MCF 10A (cell line): ENCODE measurements at regions of chr2 and their contacts with region 1.

Region 1: GRCh38 chr2:47437287-47437686 is 34.3 kb downstream of the MSH2 start:
- DNase-seq: peak; percentile 46
- H3K4me3 Mint-ChIP-seq: no peak overlapping the region
- H3K27ac Mint-ChIP-seq: no peak overlapping the region
- H3K4me1 Mint-ChIP-seq: no peaks in the 10 kb centered on the region
- H3K27me3 Mint-ChIP-seq: no peaks in the 10 kb centered on the region
- CTCF ChIP-seq: peak; percentile 60

Region 2: GRCh38 chr2:47422560-47422959 is 14.7 kb before region 1 on chr2:
- CTCF ChIA-PET with region 1: interaction called, 25 read pairs
- POLR2A ChIA-PET with region 1: interaction called, 4 read pairs
- intact Hi-C with region 1: no loop called
- DNase-seq: peak; percentile 18
- H3K4me3 Mint-ChIP-seq: no peak overlapping the region
- H3K27ac Mint-ChIP-seq: no peak overlapping the region
- H3K4me1 Mint-ChIP-seq: no peaks in the 10 kb centered on the region
- H3K27me3 Mint-ChIP-seq: no peaks in the 10 kb centered on the region
- CTCF ChIP-seq: no peak

Region 3: GRCh38 chr2:47767880-47768609 is 330.8 kb after region 1 on chr2:
- CTCF ChIA-PET with region 1: interaction called, 319 read pairs
- POLR2A ChIA-PET with region 1: interaction called, 15 read pairs
- intact Hi-C with region 1: loop called (anchors 1 kb)
- DNase-seq: peak; percentile 50
- H3K4me3 Mint-ChIP-seq: no peak overlapping the region
- H3K27ac Mint-ChIP-seq: no peak overlapping the region
- H3K4me1 Mint-ChIP-seq: peaks cover 7% of the 10 kb centered on the region
- H3K27me3 Mint-ChIP-seq: no peaks in the 10 kb centered on the region
- CTCF ChIP-seq: peak; percentile 98

Region 4: DNA sequence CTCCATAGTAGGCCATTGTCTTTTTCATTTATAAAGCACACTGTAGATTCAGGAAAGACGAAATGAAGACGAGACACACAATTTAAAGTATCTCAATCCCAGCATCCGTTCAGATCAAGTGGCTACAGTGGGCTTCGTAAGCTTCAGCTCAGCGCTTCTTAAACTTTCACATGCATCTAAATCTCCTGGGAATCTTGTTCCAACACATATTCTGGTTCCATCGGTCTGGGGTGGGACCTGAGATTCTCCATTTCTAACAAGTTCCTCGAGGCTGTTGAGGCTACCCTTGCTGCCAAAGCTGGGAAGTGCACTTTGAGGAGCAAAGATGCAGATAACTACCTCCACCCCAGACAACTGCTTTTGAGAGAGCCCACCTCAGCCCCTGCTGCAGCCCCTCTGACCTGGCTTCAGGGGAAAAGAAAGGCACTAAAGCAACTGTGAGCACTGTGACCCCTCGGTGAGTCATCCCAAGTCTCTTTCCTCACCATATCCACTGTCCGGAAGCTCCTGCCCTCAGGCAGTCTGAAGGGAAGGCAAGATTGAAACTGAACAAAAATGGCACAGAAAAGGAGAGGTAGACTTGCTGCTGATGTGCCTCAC is 670.1 kb after region 1 on chr2:
- CTCF ChIA-PET with region 1: interaction called, 6 read pairs
- POLR2A ChIA-PET with region 1: no interaction called
- intact Hi-C with region 1: loop called (anchors 1 kb)
- DNase-seq: peak; percentile 97
- H3K4me3 Mint-ChIP-seq: peak overlapping the region; percentile 62
- H3K27ac Mint-ChIP-seq: peak overlapping the region; percentile 89
- H3K4me1 Mint-ChIP-seq: peaks cover 22% of the 10 kb centered on the region
- H3K27me3 Mint-ChIP-seq: no peaks in the 10 kb centered on the region
- CTCF ChIP-seq: no peak

Region 5: GRCh38 chr2:48189552-48190228 is 752.4 kb after region 1 on chr2:
- CTCF ChIA-PET with region 1: no interaction called
- POLR2A ChIA-PET with region 1: no interaction called
- intact Hi-C with region 1: no loop called
- DNase-seq: no peak
- H3K4me3 Mint-ChIP-seq: no peak overlapping the region
- H3K27ac Mint-ChIP-seq: no peak overlapping the region
- H3K4me1 Mint-ChIP-seq: no peaks in the 10 kb centered on the region
- H3K27me3 Mint-ChIP-seq: no peaks in the 10 kb centered on the region
- CTCF ChIP-seq: no peak